GM12878 (cell line): ENCODE measurements at regions of chr7 and their contacts with region 1.

Region 1: GRCh38 chr7:98400542-98401340 is at the start of gene BAIAP2L1:
- DNase-seq: peak; percentile 48
- ATAC-seq: peak; percentile 94
- H3K4me3 ChIP-seq: peak within 1 kb of the TSS; percentile 92
- H3K27ac ChIP-seq: peak within 1 kb of the TSS; percentile 88
- H3K4me1 ChIP-seq: no peaks in the 10 kb centered on the region; the same call in 1 of the 2 replicates
- H3K27me3 ChIP-seq: peaks cover 0 to 3% of the 10 kb centered on the region in 2 experiments; a peak in 3 of 4 replicates
- CTCF ChIP-seq: no peak; a peak in 1 of 6 replicates
- EP300 ChIP-seq: no peak
- POLR2A ChIP-seq: peak; percentile 71
- RAD21 ChIP-seq: peak; percentile 68
- polyA plus RNA-seq, gene BAIAP2L1: 8.9 to 11.6 TPM

Region 2: GRCh38 chr7:98202367-98203195 is 198.2 kb before region 1 on chr7:
- CTCF ChIA-PET with region 1: interaction called, 3 read pairs
- POLR2A ChIA-PET with region 1: interaction called, 12 read pairs
- RAD21 ChIA-PET with region 1: interaction called, 6 read pairs
- SMC1A ChIA-PET with region 1: interaction called, 4 read pairs
- in situ Hi-C with region 1: no loop called
- intact Hi-C with region 1: no loop called
- DNase-seq: peak; percentile 94
- ATAC-seq: peak; percentile 94
- H3K4me3 ChIP-seq: peak overlapping the region; percentile 54; the same call in 1 of the 2 replicates
- H3K27ac ChIP-seq: peak overlapping the region; percentile 58
- H3K4me1 ChIP-seq: peaks cover 47% of the 10 kb centered on the region
- H3K27me3 ChIP-seq: no peaks in the 10 kb centered on the region
- CTCF ChIP-seq: no peak
- EP300 ChIP-seq: peak; percentile 95 to 98
- POLR2A ChIP-seq: no peak
- RAD21 ChIP-seq: 0 out of 2 replicates have a peak, but pooled peaks have one; percentile 5

Region 3: GRCh38 chr7:98251841-98252639 is 148.7 kb before region 1 on chr7 and contains the start of gene TECPR1:
- CTCF ChIA-PET with region 1: interaction called, 7 read pairs
- POLR2A ChIA-PET with region 1: no interaction called
- RAD21 ChIA-PET with region 1: interaction called, 19 read pairs
- SMC1A ChIA-PET with region 1: interaction called, 8 read pairs
- in situ Hi-C with region 1: no loop called
- intact Hi-C with region 1: no loop called
- DNase-seq: peak; percentile 66
- ATAC-seq: peak; percentile 99
- H3K4me3 ChIP-seq: peak within 1 kb of the TSS; percentile 83
- H3K27ac ChIP-seq: peak within 1 kb of the TSS; percentile 59
- H3K4me1 ChIP-seq: peaks cover 10% of the 10 kb centered on the region
- H3K27me3 ChIP-seq: no peaks in the 10 kb centered on the region
- CTCF ChIP-seq: 0 out of 6 replicates have a peak, but pooled peaks of 1 of the 3 experiments have one; percentile 1
- EP300 ChIP-seq: no peak
- POLR2A ChIP-seq: peak; percentile 86
- RAD21 ChIP-seq: no peak
- polyA plus RNA-seq, gene TECPR1: 0.26 to 0.51 TPM

Region 4: DNA sequence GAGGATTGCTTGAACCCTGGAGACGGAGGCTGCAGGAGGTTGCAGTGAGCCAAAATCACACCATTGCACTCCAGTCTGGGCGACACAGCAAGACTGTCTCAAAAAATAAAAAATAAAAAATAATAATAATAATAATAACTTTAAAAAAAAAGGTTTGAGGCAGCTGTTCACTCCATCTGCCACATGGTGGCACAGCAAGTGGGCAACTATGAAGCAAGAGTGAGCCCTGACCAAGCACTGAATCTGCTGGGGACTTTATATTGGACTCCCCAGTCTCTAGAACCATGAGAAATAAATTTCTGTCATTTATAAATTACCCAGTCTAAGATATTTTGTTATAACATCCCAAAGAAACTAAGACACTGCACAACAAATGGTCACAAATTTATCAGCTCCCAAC is 133.9 kb before region 1 on chr7:
- CTCF ChIA-PET with region 1: interaction called, 19 read pairs
- POLR2A ChIA-PET with region 1: no interaction called
- RAD21 ChIA-PET with region 1: no interaction called
- SMC1A ChIA-PET with region 1: interaction called, 5 read pairs
- in situ Hi-C with region 1: no loop called
- intact Hi-C with region 1: no loop called
- DNase-seq: no peak
- ATAC-seq: peak; percentile 79
- H3K4me3 ChIP-seq: no peak overlapping the region
- H3K27ac ChIP-seq: no peak overlapping the region
- H3K4me1 ChIP-seq: no peaks in the 10 kb centered on the region
- H3K27me3 ChIP-seq: no peaks in the 10 kb centered on the region
- CTCF ChIP-seq: peak; percentile 20 to 41 (median 24); a peak in 2 of 6 replicates
- EP300 ChIP-seq: no peak
- POLR2A ChIP-seq: no peak
- RAD21 ChIP-seq: 0 out of 2 replicates have a peak, but pooled peaks have one; percentile 6

Region 5: DNA sequence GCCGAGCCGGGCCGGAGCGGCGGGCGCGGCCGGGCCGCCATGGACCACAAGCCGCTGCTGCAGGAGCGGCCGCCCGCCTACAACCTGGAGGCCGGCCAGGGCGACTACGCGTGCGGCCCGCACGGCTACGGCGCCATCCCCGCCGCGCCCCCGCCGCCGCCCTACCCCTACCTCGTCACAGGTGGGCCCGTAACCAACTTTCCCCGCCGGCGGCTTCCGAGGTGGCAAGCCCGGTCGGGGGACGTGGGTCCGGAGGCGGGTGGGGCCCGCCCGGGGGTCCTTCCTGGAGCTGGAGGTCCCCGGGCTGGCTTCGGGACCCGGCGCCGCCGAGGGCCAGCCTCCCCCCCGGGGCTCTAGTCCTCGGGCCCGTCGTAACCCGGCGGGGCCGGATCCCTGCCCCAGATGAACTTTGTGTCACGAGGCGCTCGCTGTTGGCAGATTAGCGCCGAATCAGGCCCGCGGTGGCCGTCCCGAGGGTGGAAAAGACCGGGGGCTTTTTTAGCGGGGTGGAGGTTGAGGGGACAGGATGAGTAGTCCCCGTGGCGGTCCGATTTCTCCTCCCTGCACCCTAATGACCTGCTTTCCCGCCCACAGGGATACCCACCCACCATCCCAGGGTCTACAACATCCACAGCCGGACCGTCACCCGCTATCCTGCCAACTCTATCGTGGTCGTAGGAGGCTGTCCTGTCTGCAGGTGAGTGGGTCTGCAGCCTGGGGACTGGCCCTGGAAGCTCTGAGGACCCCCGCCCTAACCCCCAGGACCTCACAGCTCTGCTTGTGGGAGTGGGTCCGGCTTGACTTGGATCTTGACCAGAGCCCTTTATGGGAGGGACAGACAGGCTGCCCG is 118.8 kb before region 1 on chr7:
- CTCF ChIA-PET with region 1: interaction called, 10 read pairs
- POLR2A ChIA-PET with region 1: interaction called, 5 read pairs
- RAD21 ChIA-PET with region 1: interaction called, 8 read pairs
- SMC1A ChIA-PET with region 1: interaction called, 3 read pairs
- in situ Hi-C with region 1: no loop called
- intact Hi-C with region 1: no loop called
- DNase-seq: no peak
- ATAC-seq: peak; percentile 32
- H3K4me3 ChIP-seq: peak overlapping the region; percentile 84
- H3K27ac ChIP-seq: peak overlapping the region; percentile 27; the same call in 1 of the 2 replicates
- H3K4me1 ChIP-seq: peaks cover 8% of the 10 kb centered on the region
- H3K27me3 ChIP-seq: no peaks in the 10 kb centered on the region
- CTCF ChIP-seq: no peak
- EP300 ChIP-seq: no peak
- POLR2A ChIP-seq: peak; percentile 36
- RAD21 ChIP-seq: no peak

Region 6: DNA sequence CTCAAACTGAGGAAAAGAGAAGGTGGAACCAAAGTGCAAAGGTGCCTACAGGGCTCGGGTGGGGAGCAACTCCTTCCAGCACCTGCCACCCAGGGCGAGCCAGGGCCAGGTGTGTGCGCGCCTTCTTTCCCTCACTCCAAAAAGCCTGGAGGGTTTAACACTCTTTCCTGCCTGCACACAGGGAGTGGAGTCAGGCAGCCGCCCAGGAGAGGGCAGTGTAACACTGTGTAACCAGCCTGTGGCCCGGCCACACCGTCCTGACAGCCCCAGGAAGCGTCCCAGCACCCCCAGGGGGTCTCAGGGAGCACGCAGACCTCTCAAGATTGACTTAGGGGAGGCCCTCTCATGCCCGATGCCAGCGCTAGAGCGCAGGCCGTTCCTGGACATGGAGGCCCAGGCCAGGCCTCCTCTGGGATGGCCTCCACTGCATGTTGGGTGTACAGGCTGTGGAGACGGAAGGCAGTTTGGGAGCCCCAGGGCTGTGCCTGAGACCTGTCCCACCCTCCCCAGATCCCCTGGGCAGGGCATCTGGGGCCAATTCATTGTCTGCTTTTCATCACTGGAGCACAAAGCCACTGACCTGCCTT is 105.9 kb before region 1 on chr7:
- CTCF ChIA-PET with region 1: interaction called, 28 read pairs
- POLR2A ChIA-PET with region 1: no interaction called
- RAD21 ChIA-PET with region 1: interaction called, 12 read pairs
- SMC1A ChIA-PET with region 1: interaction called, 17 read pairs
- in situ Hi-C with region 1: loop called (anchors 5 kb)
- intact Hi-C with region 1: loop called (anchors 1 kb)
- DNase-seq: no peak
- ATAC-seq: peak; percentile 92
- H3K4me3 ChIP-seq: no peak overlapping the region
- H3K27ac ChIP-seq: no peak overlapping the region
- H3K4me1 ChIP-seq: no peaks in the 10 kb centered on the region
- H3K27me3 ChIP-seq: no peaks in the 10 kb centered on the region
- CTCF ChIP-seq: peak; percentile 66 to 79 (median 70)
- EP300 ChIP-seq: no peak
- POLR2A ChIP-seq: no peak
- RAD21 ChIP-seq: peak; percentile 73

Region 7: GRCh38 chr7:98420966-98421612 is 20.3 kb after region 1 on chr7:
- CTCF ChIA-PET with region 1: interaction called, 12 read pairs
- POLR2A ChIA-PET with region 1: no interaction called
- RAD21 ChIA-PET with region 1: interaction called, 3 read pairs
- SMC1A ChIA-PET with region 1: interaction called, 3 read pairs
- in situ Hi-C with region 1: no loop called
- intact Hi-C with region 1: no loop called
- DNase-seq: no peak
- ATAC-seq: peak; percentile 98
- H3K4me3 ChIP-seq: no peak overlapping the region
- H3K27ac ChIP-seq: no peak overlapping the region
- H3K4me1 ChIP-seq: peaks cover 6% of the 10 kb centered on the region; the same call in 1 of the 2 replicates
- H3K27me3 ChIP-seq: 0 out of 4 replicates have a peak, but pooled peaks cover 0 to 3% of the 10 kb centered on the region in 2 experiments
- CTCF ChIP-seq: peak; percentile 84 to 95 (median 93)
- EP300 ChIP-seq: no peak
- POLR2A ChIP-seq: no peak
- RAD21 ChIP-seq: peak; percentile 59